ENCODE measurements at regions of chr9 and their contacts with region 1.

Region 1: GRCh38 chr9:994005-994404 is 17.6 kb downstream of the DMRT3 start:
- DNase-seq: peak; percentile 50

Region 2: DNA sequence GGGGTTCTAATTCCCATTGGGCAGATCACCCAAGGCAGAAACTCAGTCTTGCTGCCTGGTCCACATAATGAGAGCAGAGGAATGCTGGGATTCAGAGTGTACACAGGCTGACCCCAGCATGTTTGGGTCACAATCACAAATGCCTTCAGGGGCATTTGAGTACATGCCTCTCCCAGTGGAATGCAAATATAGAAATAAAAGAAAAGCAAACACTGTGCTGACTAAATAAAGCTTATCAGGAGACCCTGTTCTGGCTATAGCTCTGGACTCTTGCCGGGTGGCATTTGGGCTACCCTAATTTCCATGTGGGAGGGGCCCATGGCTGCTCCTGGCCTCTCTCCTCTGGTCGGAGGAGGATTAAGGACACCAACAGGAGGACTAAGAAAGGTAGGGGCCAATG is 658.0 kb before region 1 on chr9:
- in situ Hi-C with region 1: no loop called
- DNase-seq: no peak

Region 3: GRCh38 chr9:347667-348292 is 646.2 kb before region 1 on chr9:
- in situ Hi-C with region 1: no loop called
- DNase-seq: peak; percentile 28

Region 4: GRCh38 chr9:893843-894420 is 100.1 kb before region 1 on chr9:
- in situ Hi-C with region 1: loop called (anchors 10 kb)
- DNase-seq: peak; percentile 75

Region 5: DNA sequence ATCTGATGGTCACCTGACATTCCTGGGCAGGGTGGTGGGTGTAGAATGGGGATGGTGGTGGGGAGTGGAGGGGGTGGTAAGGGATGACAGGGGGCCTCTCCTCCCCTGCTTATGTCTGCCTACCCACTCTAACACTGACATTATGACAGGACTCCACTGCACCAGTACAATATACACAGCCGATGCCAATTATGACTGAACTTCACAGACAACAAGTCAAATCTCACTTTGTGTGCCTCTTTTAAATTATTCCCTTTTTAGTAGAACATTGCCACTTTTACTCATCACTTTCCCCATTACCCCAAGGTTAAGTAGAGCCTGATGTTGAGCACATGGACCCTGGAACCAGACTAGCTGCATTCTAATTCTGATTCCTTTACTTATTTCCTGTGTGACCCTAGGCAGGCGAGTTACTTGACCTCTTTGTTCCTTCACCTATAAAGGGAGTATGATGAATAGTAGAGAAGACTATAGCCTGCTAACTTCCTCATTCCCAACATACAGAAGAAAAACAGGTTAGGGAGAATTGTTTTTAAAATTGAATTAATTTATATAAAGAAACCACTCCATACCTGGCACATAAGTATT is 520.9 kb after region 1 on chr9:
- in situ Hi-C with region 1: no loop called
- DNase-seq: no peak

Measured in KBM-7 (cell line).